ENCODE measurements at regions of chr18 and their contacts with region 1.

Region 1: DNA sequence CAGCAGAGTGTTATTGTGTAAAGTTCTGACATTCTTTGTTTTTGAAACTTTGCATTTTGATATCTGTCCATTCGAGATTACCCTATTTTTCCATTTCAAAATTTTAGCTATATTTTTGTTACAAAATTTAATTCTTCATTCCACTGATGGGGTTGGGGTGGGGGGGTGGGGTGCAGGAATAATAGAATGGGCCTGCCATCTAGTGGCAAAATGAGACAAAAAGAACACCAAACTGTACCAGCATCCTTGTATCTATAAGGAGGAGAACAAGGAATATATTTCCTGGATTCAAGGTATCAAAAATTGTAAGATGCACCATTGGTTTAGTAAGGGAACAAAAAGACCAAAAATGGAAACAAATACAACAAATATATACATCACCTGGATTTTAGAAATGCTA is 27.9 kb upstream of the TTR start:
- DNase-seq: no peak
- H3K4me3 ChIP-seq: no peak overlapping the region
- H3K27ac ChIP-seq: no peak overlapping the region
- H3K4me1 ChIP-seq: no peaks in the 10 kb centered on the region
- H3K27me3 ChIP-seq: no peaks in the 10 kb centered on the region
- CTCF ChIP-seq: no peak; a peak in 1 of 4 replicates
- EP300 ChIP-seq: no peak
- POLR2A ChIP-seq: no peak
- RAD21 ChIP-seq: no peak; a peak in 1 of 4 replicates

Region 2: GRCh38 chr18:31454066-31454708 is 109.6 kb before region 1 on chr18:
- CTCF ChIA-PET with region 1: no interaction called
- POLR2A ChIA-PET with region 1: no interaction called
- DNase-seq: no peak
- H3K4me3 ChIP-seq: no peak overlapping the region
- H3K27ac ChIP-seq: no peak overlapping the region
- H3K4me1 ChIP-seq: no peaks in the 10 kb centered on the region
- H3K27me3 ChIP-seq: no peaks in the 10 kb centered on the region
- CTCF ChIP-seq: no peak
- EP300 ChIP-seq: no peak
- POLR2A ChIP-seq: no peak
- RAD21 ChIP-seq: no peak

Region 3: GRCh38 chr18:31546476-31546875 is 17.3 kb before region 1 on chr18:
- CTCF ChIA-PET with region 1: interaction called, 14 read pairs
- POLR2A ChIA-PET with region 1: interaction called, 4 read pairs
- DNase-seq: no peak
- H3K4me3 ChIP-seq: no peak overlapping the region
- H3K27ac ChIP-seq: no peak overlapping the region
- H3K4me1 ChIP-seq: peaks cover 0 to 5% (median under 1%) of the 10 kb centered on the region in 4 experiments; a peak in 2 of 7 replicates
- H3K27me3 ChIP-seq: no peaks in the 10 kb centered on the region
- CTCF ChIP-seq: no peak
- EP300 ChIP-seq: no peak
- POLR2A ChIP-seq: no peak
- RAD21 ChIP-seq: no peak

Region 4: DNA sequence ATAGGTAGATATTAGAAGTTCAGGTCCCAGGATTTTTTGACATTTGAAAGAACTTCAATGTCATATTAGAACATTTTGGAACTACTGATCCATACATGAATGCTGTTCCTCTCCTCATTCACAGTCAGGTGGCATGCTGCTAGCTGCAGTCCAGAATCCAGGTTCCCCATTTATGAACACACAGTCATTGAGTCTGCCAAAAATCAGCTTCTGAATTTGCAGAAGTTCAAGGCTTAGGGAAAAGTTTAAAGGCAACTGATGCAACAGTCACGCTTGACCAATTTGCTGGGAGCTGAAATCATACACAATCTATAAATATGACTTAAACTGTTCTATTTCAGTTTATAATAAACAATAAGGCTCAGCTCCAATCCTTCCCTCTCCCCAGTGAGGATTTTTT is 10.6 kb after region 1 on chr18:
- CTCF ChIA-PET with region 1: interaction called, 11 read pairs
- POLR2A ChIA-PET with region 1: no interaction called
- DNase-seq: no peak
- H3K4me3 ChIP-seq: no peak overlapping the region
- H3K27ac ChIP-seq: no peak overlapping the region
- H3K4me1 ChIP-seq: no peaks in the 10 kb centered on the region
- H3K27me3 ChIP-seq: no peaks in the 10 kb centered on the region
- CTCF ChIP-seq: no peak
- EP300 ChIP-seq: no peak
- POLR2A ChIP-seq: no peak
- RAD21 ChIP-seq: no peak

Measured in H1 (cell line).